CD4-positive, alpha-beta memory T cell (primary cell): ENCODE measurements at regions of chr11 and their contacts with region 1.

Region 1: GRCh38 chr11:34468209-34468841 is 29.6 kb downstream of the CAT start:
- DNase-seq: peak in 4 of 5 donors; percentile 12 to 29 (median 28)
- H3K4me3 ChIP-seq: no peak overlapping the region
- H3K4me3 Mint-ChIP-seq: no peak overlapping the region
- H3K27ac ChIP-seq: no peak overlapping the region
- H3K27ac Mint-ChIP-seq: peak overlapping the region in 2 of 7 donors; percentile 25 to 77
- H3K4me1 ChIP-seq: peaks cover 5% of the 10 kb centered on the region
- H3K4me1 Mint-ChIP-seq: peaks cover 6 to 16% (median 9%) of the 10 kb centered on the region in 4 donors
- H3K27me3 ChIP-seq: no peaks in the 10 kb centered on the region
- H3K27me3 Mint-ChIP-seq: no peaks in the 10 kb centered on the region

Region 2: DNA sequence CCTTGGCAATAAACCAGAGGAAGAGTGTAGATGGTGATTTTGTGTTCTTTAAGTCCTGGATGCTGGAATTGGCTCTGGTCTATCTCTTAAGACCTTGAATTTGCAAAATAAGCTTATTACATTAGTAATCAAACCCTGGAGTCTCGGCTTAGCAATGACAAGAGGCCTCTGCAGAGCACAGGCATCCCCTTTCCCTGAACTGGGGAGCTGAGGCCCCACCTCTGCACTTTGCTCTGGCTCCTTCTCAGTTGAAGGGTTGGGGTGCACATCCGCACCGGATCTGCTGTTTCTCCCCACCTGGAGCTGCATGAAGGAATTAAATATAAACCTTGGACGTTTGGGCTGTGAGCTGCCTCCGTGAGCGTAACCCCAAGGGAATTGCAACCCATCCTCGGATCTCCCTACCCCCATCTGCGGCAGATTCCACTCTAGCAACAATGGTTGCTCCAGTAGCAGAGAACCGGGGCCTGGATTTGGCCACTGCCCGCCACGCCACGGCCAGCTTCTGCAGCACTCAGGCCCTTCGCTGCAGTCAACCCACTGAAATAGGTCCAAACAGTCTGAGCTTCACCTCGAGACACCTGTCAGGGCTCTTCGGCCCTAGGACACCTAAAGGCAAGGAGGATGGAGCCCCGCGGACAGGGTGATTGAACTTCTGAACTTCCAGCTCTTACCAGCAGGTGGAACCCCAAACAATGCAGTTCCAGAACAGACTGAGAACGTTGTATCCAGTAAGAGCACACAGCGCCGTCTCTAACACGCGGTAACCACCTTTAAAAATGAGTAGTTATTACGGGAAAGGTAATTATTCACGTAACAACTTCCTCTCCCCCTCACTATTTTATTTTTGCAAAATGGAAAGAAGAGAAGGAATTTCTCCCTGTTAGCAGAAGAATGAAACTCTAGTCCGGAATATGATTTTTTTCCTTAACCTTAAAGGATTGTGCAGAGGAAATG is 471.5 kb before region 1 on chr11:
- CTCF ChIA-PET with region 1: interaction called, 7 read pairs
- POLR2A ChIA-PET with region 1: no interaction called
- intact Hi-C with region 1: loop called (anchors 1 kb)
- DNase-seq: peak; percentile 71 to 77 (median 72)
- H3K4me3 ChIP-seq: no peak overlapping the region
- H3K4me3 Mint-ChIP-seq: peak overlapping the region in 6 of 8 donors; percentile 4 to 73 (median 62)
- H3K27ac ChIP-seq: no peak overlapping the region
- H3K27ac Mint-ChIP-seq: no peak overlapping the region
- H3K4me1 ChIP-seq: peaks cover 8% of the 10 kb centered on the region
- H3K4me1 Mint-ChIP-seq: peaks cover 6 to 11% (median 7%) of the 10 kb centered on the region in 4 donors
- H3K27me3 ChIP-seq: no peaks in the 10 kb centered on the region
- H3K27me3 Mint-ChIP-seq: peaks cover 14 to 23% of the 10 kb centered on the region in 2 donors

Region 3: GRCh38 chr11:34327804-34328631 is 140.3 kb before region 1 on chr11:
- CTCF ChIA-PET with region 1: no interaction called
- POLR2A ChIA-PET with region 1: no interaction called
- intact Hi-C with region 1: no loop called
- DNase-seq: no peak
- H3K4me3 ChIP-seq: no peak overlapping the region
- H3K4me3 Mint-ChIP-seq: no peak overlapping the region
- H3K27ac ChIP-seq: no peak overlapping the region
- H3K27ac Mint-ChIP-seq: no peak overlapping the region
- H3K4me1 ChIP-seq: no peaks in the 10 kb centered on the region
- H3K4me1 Mint-ChIP-seq: no peaks in the 10 kb centered on the region
- H3K27me3 ChIP-seq: no peaks in the 10 kb centered on the region
- H3K27me3 Mint-ChIP-seq: peaks cover 6 to 7% of the 10 kb centered on the region in 2 donors

Region 4: GRCh38 chr11:34366522-34366921 is 101.8 kb before region 1 on chr11:
- CTCF ChIA-PET with region 1: interaction called, 8 read pairs
- POLR2A ChIA-PET with region 1: no interaction called
- intact Hi-C with region 1: loop called (anchors 1 kb)
- DNase-seq: no peak
- H3K4me3 ChIP-seq: no peak overlapping the region
- H3K4me3 Mint-ChIP-seq: no peak overlapping the region
- H3K27ac ChIP-seq: no peak overlapping the region
- H3K27ac Mint-ChIP-seq: no peak overlapping the region
- H3K4me1 ChIP-seq: no peaks in the 10 kb centered on the region
- H3K4me1 Mint-ChIP-seq: peaks cover 0 to 8% (median 3%) of the 10 kb centered on the region in 4 donors
- H3K27me3 ChIP-seq: peaks cover 4% of the 10 kb centered on the region
- H3K27me3 Mint-ChIP-seq: peaks cover 9 to 29% of the 10 kb centered on the region in 2 donors

Region 5: GRCh38 chr11:34417202-34417601 is 51.1 kb before region 1 on chr11:
- CTCF ChIA-PET with region 1: interaction called, 3 read pairs
- POLR2A ChIA-PET with region 1: no interaction called
- intact Hi-C with region 1: loop called (anchors 1 kb)
- DNase-seq: no peak
- H3K4me3 ChIP-seq: no peak overlapping the region
- H3K4me3 Mint-ChIP-seq: no peak overlapping the region
- H3K27ac ChIP-seq: no peak overlapping the region
- H3K27ac Mint-ChIP-seq: no peak overlapping the region
- H3K4me1 ChIP-seq: no peaks in the 10 kb centered on the region
- H3K4me1 Mint-ChIP-seq: peaks cover 0 to 1% (median 0%) of the 10 kb centered on the region in 4 donors
- H3K27me3 ChIP-seq: no peaks in the 10 kb centered on the region
- H3K27me3 Mint-ChIP-seq: peaks cover 12 to 13% of the 10 kb centered on the region in 2 donors

Region 6: GRCh38 chr11:34454308-34455032 is 13.9 kb before region 1 on chr11:
- CTCF ChIA-PET with region 1: interaction called, 20 read pairs
- POLR2A ChIA-PET with region 1: no interaction called
- intact Hi-C with region 1: no loop called
- DNase-seq: no peak
- H3K4me3 ChIP-seq: no peak overlapping the region
- H3K4me3 Mint-ChIP-seq: no peak overlapping the region
- H3K27ac ChIP-seq: no peak overlapping the region
- H3K27ac Mint-ChIP-seq: no peak overlapping the region
- H3K4me1 ChIP-seq: peaks cover under 1% of the 10 kb centered on the region
- H3K4me1 Mint-ChIP-seq: peaks cover 0 to 9% (median 5%) of the 10 kb centered on the region in 4 donors
- H3K27me3 ChIP-seq: no peaks in the 10 kb centered on the region
- H3K27me3 Mint-ChIP-seq: no peaks in the 10 kb centered on the region